Esophagus muscularis mucosa (tissue), 4 donors: ENCODE measurements at regions of chr1 and their contacts with region 1.

Region 1: GRCh38 chr1:228131766-228132165 is 8.3 kb upstream of the GUK1 start:
- DNase-seq: no peak
- H3K4me3 ChIP-seq: no peak overlapping the region
- H3K27ac ChIP-seq: no peak overlapping the region
- H3K4me1 ChIP-seq: peaks cover 3 to 10% (median 6%) of the 10 kb centered on the region in 4 donors
- H3K27me3 ChIP-seq: peaks cover 0 to 46% (median 1%) of the 10 kb centered on the region in 4 donors
- CTCF ChIP-seq: no peak
- EP300 ChIP-seq: no peak
- POLR2A ChIP-seq: no peak

Region 2: DNA sequence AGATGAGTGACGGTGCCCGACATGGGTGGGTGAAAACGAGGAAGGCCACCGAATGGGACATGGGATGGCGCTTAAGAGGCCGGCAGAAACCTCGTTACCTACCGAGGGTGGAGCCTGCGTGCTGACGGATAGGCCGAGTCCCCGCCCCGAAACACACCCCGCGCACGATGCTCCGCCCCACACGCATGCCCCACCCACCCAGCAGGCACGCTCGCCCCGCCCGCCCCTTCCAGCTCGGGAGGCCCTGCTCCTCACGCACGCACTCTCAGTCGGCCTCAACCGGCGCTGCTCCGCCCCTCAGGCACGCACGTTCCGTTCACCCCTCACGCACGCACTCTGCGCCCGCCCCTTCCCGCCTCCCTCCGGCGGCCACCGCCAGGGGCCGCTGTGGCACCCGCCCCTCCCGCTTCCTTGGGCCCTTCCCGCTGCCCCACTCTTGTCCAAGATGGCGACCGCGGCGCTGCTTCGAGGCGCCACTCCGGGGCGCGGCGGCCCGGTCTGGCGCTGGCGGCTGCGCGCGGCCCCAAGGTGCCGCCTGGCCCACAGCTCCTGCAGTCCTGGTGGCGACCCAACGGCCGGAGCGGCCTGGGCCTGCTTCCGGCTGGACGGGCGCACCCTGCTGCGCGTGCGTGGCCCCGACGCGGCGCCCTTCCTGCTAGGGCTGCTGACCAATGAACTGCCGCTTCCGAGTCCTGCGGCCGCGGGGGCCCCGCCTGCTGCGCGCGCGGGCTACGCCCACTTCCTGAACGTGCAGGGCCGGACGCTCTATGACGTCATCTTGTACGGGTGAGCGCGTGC is 33.8 kb after region 1 on chr1 and contains the start of gene IBA57:
- intact Hi-C with region 1: loop called (anchors 5 kb)
- DNase-seq: peak; percentile 100
- H3K4me3 ChIP-seq: peak within 1 kb of the TSS; percentile 76 to 99 (median 88)
- H3K27ac ChIP-seq: peak within 1 kb of the TSS; percentile 97 to 100 (median 100)
- H3K4me1 ChIP-seq: peaks cover 46 to 51% (median 50%) of the 10 kb centered on the region in 4 donors
- H3K27me3 ChIP-seq: peaks cover 0 to 22% (median 5%) of the 10 kb centered on the region in 4 donors
- CTCF ChIP-seq: peak; percentile 93 to 97 (median 94)
- EP300 ChIP-seq: peak; percentile 93
- POLR2A ChIP-seq: peak; percentile 77
- total RNA-seq, gene IBA57: 3.7 to 11.8 (median 6.6) TPM

Region 3: GRCh38 chr1:228515200-228515834 is 383.6 kb after region 1 on chr1:
- intact Hi-C with region 1: loop called (anchors 2 kb)
- DNase-seq: no peak
- H3K4me3 ChIP-seq: no peak overlapping the region
- H3K27ac ChIP-seq: no peak overlapping the region
- H3K4me1 ChIP-seq: no peaks in the 10 kb centered on the region
- H3K27me3 ChIP-seq: peaks cover 0 to 57% (median 0%) of the 10 kb centered on the region in 4 donors
- CTCF ChIP-seq: peak; percentile 59 to 69 (median 64)
- EP300 ChIP-seq: no peak
- POLR2A ChIP-seq: no peak

Region 4: GRCh38 chr1:228555074-228555989 is 423.6 kb after region 1 on chr1:
- intact Hi-C with region 1: no loop called
- DNase-seq: no peak
- H3K4me3 ChIP-seq: no peak overlapping the region
- H3K27ac ChIP-seq: no peak overlapping the region
- H3K4me1 ChIP-seq: no peaks in the 10 kb centered on the region
- H3K27me3 ChIP-seq: peaks cover 0 to 42% (median 0%) of the 10 kb centered on the region in 4 donors
- CTCF ChIP-seq: no peak
- EP300 ChIP-seq: no peak
- POLR2A ChIP-seq: no peak